ENCODE measurements at regions of chr3 and their contacts with region 1.

Region 1: DNA sequence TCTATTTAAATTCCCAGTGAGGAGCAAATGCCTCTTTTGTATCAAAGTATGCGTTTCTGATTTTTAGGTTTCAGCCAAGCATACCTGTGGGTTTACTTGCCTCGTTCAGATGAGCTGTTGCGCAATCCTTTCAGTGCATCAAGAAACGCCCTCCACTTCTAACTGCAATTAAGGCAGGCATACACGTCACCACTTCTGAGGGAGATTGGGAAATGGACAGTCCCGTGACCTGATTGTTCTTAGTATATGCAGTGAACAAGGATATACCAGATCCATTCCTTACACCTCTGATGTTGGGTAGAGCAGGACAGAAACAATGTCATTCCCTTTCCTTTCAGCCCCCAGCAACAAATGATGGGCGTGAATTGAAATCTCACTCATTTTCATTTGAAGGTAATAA is 219.0 kb downstream of the ITPR1 start:
- DNase-seq: no peak
- H3K4me3 Mint-ChIP-seq: no peak overlapping the region
- H3K27ac Mint-ChIP-seq: no peak overlapping the region
- H3K4me1 Mint-ChIP-seq: peaks cover 17% of the 10 kb centered on the region
- H3K27me3 Mint-ChIP-seq: no peaks in the 10 kb centered on the region

Region 2: GRCh38 chr3:4776980-4777581 is 64.9 kb after region 1 on chr3:
- CTCF ChIA-PET with region 1: no interaction called
- DNase-seq: no peak
- H3K4me3 Mint-ChIP-seq: no peak overlapping the region
- H3K27ac Mint-ChIP-seq: peak overlapping the region; percentile 67
- H3K4me1 Mint-ChIP-seq: peaks cover 64% of the 10 kb centered on the region
- H3K27me3 Mint-ChIP-seq: no peaks in the 10 kb centered on the region

Region 3: GRCh38 chr3:4826237-4827100 is 114.3 kb after region 1 on chr3:
- CTCF ChIA-PET with region 1: interaction called, 16 read pairs
- DNase-seq: no peak
- H3K4me3 Mint-ChIP-seq: peak overlapping the region; percentile 78
- H3K27ac Mint-ChIP-seq: peak overlapping the region; percentile 86
- H3K4me1 Mint-ChIP-seq: peaks cover 97% of the 10 kb centered on the region
- H3K27me3 Mint-ChIP-seq: peaks cover 3% of the 10 kb centered on the region

Region 4: DNA sequence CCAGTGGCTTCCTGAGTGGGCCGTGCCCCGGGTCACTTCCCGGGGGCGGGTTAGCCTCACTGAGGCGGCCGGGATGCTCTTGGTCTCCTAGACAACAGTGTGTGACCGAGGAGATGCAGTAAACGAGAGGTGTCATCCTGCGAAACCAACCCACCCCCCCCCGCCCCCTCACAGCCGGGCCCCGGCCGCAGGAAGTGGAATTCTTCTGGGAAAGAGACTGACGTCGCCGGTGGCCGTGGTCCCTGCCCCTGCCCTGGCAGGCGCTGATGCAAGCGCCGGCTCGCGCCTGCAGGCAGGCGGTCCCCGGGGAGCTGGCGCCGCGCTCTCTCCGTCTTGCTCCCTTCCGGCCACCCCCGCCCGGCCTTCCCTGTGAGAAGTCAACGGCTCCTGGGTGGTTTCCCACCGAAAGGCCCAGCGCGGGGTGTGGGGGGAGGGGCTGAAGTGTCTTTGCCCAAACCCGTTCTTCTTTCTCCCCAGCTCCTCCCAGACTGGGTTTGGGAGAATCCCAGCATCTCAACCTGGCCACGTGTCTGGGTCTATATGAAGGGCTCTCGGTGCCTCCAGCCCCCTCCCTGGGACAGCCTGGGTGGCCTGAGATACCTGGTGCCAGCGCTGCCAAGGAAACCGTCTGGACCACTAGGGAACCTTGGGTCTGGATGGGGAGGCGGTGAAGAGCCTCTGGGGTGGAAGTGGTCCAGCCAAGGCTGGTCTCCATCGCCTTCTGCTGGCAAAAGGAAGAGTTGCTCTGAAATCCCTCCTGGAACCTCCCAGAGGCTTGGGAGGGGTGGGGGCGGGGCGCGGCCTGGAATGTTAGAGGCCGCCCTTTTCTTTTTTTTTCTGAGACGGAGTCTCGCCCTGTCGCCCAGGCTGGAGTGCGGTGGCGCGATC is 314.4 kb after region 1 on chr3:
- CTCF ChIA-PET with region 1: interaction called, 39 read pairs
- DNase-seq: peak; percentile 71
- H3K4me3 Mint-ChIP-seq: peak overlapping the region; percentile 76
- H3K27ac Mint-ChIP-seq: peak overlapping the region; percentile 45
- H3K4me1 Mint-ChIP-seq: peaks cover 51% of the 10 kb centered on the region
- H3K27me3 Mint-ChIP-seq: peaks cover 35% of the 10 kb centered on the region

Region 5: DNA sequence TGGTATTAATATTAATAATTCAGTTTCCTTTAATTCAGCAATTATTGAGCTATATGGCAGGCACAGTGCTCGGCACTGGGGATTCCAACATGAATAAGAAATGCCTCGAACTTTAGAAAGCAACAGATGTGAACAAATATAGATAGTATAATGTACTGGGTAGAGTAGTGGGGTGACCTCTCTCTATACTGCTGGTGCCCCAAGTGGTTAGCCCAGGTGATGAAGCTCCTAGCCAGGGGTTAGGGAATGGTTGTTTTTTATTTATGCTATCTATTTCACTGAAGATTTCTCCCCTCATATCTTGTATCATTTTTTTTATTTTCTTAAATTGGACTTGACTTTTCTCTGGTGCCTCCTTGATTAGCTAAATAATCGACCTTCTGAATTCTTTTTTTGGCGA is 329.2 kb after region 1 on chr3:
- CTCF ChIA-PET with region 1: interaction called, 15 read pairs
- DNase-seq: no peak
- H3K4me3 Mint-ChIP-seq: no peak overlapping the region
- H3K27ac Mint-ChIP-seq: no peak overlapping the region
- H3K4me1 Mint-ChIP-seq: peaks cover 5% of the 10 kb centered on the region
- H3K27me3 Mint-ChIP-seq: peaks cover 8% of the 10 kb centered on the region

Measured in activated naive CD4-positive, alpha-beta T cell treated with anti-CD3 and anti-CD28 coated beads, Interleukin-2, amount 10 ng/mL, durations not matched to agents 7 days and 5 days (primary cell).